Calu3 (cell line): ENCODE measurements at regions of chr5 and their contacts with region 1.

Region 1: GRCh38 chr5:73596705-73597328 is 29.2 kb upstream of the ARHGEF28 start:
- DNase-seq: peak; percentile 71
- H3K4me3 Mint-ChIP-seq: no peak overlapping the region
- H3K27ac Mint-ChIP-seq: no peak overlapping the region
- H3K4me1 Mint-ChIP-seq: peaks cover 22% of the 10 kb centered on the region
- H3K27me3 Mint-ChIP-seq: no peaks in the 10 kb centered on the region
- CTCF ChIP-seq: peak; percentile 67

Region 2: DNA sequence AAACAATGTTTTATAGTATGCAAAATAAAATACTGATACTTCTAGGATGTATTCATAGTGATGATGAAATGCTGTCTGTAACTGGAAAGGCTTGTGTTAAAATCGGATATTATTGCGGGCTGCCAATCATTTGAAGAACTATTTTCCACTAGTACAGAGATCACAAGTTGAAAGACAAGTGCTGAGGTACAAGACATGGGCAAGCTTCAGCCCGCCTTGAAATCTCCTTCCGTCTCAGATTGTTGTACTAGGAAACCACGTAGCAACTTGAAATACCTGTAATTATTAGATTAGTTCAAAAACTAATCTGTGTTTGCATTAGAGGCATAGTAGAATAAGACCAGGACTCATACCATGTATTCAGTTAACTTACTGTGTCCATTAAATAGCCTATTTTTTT is 247.3 kb after region 1 on chr5:
- CTCF ChIA-PET with region 1: no interaction called
- intact Hi-C with region 1: no loop called
- DNase-seq: no peak
- H3K4me3 Mint-ChIP-seq: no peak overlapping the region
- H3K27ac Mint-ChIP-seq: no peak overlapping the region
- H3K4me1 Mint-ChIP-seq: peaks cover 9% of the 10 kb centered on the region
- H3K27me3 Mint-ChIP-seq: no peaks in the 10 kb centered on the region
- CTCF ChIP-seq: no peak

Region 3: DNA sequence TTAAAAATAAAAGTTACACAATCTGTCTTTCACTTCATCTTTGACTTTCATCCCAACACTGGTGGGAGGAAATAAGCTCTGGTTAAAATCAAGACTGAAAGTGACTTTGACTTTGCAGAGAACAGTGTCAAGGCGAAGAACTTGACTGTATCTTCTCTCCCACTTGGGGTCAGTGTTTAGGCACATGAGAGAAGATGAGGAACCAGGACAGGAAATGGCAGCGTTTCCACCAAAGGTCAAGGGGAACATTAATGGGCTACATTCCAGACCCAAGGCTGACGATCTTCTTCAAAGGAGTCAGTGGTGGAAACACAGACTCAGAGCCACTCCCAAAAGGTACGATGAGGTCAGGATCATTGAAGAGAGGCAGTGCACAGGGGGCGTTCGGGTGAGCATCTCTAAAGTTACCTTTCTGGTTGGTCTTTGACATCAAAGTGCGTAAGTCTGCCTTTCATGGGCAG is 438.7 kb after region 1 on chr5:
- CTCF ChIA-PET with region 1: interaction called, 10 read pairs
- intact Hi-C with region 1: no loop called
- DNase-seq: peak; percentile 49
- H3K4me3 Mint-ChIP-seq: no peak overlapping the region
- H3K27ac Mint-ChIP-seq: no peak overlapping the region
- H3K4me1 Mint-ChIP-seq: peaks cover 15% of the 10 kb centered on the region
- H3K27me3 Mint-ChIP-seq: no peaks in the 10 kb centered on the region
- CTCF ChIP-seq: peak; percentile 40